CD4-positive, alpha-beta T cell (primary cell): ENCODE measurements at regions of chr11 and their contacts with region 1.

Region 1: GRCh38 chr11:59171508-59172322 is at the start of gene DTX4:
- DNase-seq: peak; percentile 78 to 94 (median 86)
- ATAC-seq: peak; percentile 87
- H3K4me3 ChIP-seq: peak within 1 kb of the TSS; percentile 73
- H3K4me3 Mint-ChIP-seq: peak within 1 kb of the TSS; percentile 89
- H3K27ac ChIP-seq: no peak within 1 kb of the TSS
- H3K27ac Mint-ChIP-seq: peak within 1 kb of the TSS; percentile 31
- H3K4me1 ChIP-seq: peaks cover 18% of the 10 kb centered on the region
- H3K4me1 Mint-ChIP-seq: peaks cover 13% of the 10 kb centered on the region
- H3K27me3 ChIP-seq: no peaks in the 10 kb centered on the region
- H3K27me3 Mint-ChIP-seq: peaks cover 8% of the 10 kb centered on the region
- CTCF ChIP-seq: peak; percentile 87
- total RNA-seq, gene DTX4: 0.93 to 1.0 TPM

Region 2: DNA sequence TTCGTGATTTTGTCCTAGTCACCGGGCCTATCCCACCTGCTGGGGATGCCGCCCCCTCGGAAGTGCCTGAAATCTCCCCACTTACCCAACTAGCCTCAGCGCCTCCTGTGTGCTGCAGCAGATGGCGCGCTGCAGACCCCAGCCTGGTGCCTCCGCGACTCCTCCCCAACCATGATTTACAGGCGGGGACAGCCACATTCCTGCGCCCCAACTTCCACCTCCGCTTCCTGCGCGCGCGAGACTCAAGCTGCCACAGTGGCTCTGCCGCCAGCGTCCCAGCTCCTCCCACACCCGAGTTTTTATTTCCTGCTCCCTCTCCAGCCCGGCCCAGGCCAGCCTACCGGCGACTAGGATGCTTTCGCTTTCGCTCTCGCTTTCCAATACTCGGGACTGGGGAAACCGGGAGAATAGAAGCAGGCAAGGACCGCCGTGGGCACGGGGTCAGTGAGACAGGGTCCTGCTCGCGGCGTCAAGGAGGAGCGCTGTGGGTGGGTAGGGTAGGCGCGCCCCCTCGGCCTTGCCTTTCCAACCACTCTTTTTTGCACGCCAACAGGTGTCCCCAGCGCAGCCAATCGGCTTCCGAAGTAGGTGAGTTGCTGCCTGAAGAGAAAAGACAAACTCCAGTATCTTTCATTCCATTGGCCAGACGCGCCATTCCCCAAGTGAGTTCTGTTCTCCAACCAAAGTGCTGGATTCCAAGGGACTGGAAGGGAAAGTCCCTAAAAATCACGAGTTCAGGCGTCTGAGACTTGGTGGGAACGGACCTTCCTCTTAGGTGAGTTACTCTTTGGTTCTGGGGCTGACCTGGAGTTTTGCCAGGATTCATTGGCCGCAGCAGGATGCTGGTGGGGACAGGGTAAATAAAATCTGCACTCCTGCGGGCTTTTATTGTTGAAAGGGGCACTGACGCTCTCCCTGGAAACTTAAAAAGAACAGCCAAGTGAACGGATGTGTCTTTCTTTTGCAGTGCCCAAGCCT is 28.9 kb before region 1 on chr11 and contains the start of gene FAM111A:
- CTCF ChIA-PET with region 1: interaction called, 51 read pairs
- POLR2A ChIA-PET with region 1: interaction called, 16 read pairs
- intact Hi-C with region 1: no loop called
- DNase-seq: peak; percentile 67 to 95 (median 82)
- ATAC-seq: peak; percentile 81
- H3K4me3 ChIP-seq: peak within 1 kb of the TSS; percentile 79
- H3K4me3 Mint-ChIP-seq: peak within 1 kb of the TSS; percentile 94
- H3K27ac ChIP-seq: peak within 1 kb of the TSS; percentile 80 to 91
- H3K27ac Mint-ChIP-seq: peak within 1 kb of the TSS; percentile 90
- H3K4me1 ChIP-seq: peaks cover 23% of the 10 kb centered on the region
- H3K4me1 Mint-ChIP-seq: peaks cover 50% of the 10 kb centered on the region
- H3K27me3 ChIP-seq: no peaks in the 10 kb centered on the region
- H3K27me3 Mint-ChIP-seq: no peaks in the 10 kb centered on the region
- CTCF ChIP-seq: no peak
- total RNA-seq, gene FAM111A: 32.8 to 34.4 TPM

Region 3: GRCh38 chr11:59158206-59159068 is 13.3 kb before region 1 on chr11:
- CTCF ChIA-PET with region 1: interaction called, 34 read pairs
- POLR2A ChIA-PET with region 1: no interaction called
- intact Hi-C with region 1: no loop called
- DNase-seq: peak; percentile 34 to 88 (median 48)
- ATAC-seq: peak; percentile 97
- H3K4me3 ChIP-seq: no peak overlapping the region
- H3K4me3 Mint-ChIP-seq: no peak overlapping the region
- H3K27ac ChIP-seq: no peak overlapping the region
- H3K27ac Mint-ChIP-seq: no peak overlapping the region
- H3K4me1 ChIP-seq: no peaks in the 10 kb centered on the region
- H3K4me1 Mint-ChIP-seq: peaks cover 9% of the 10 kb centered on the region
- H3K27me3 ChIP-seq: no peaks in the 10 kb centered on the region
- H3K27me3 Mint-ChIP-seq: peaks cover 9% of the 10 kb centered on the region
- CTCF ChIP-seq: peak; percentile 82

Region 4: GRCh38 chr11:59207988-59208451 is 36.3 kb after region 1 on chr11:
- CTCF ChIA-PET with region 1: interaction called, 4 read pairs
- POLR2A ChIA-PET with region 1: interaction called, 7 read pairs
- intact Hi-C with region 1: loop called (anchors 1 kb)
- DNase-seq: peak in 10 of 14 experiments; percentile 2 to 77 (median 13)
- ATAC-seq: peak; percentile 84
- H3K4me3 ChIP-seq: peak overlapping the region; percentile 37
- H3K4me3 Mint-ChIP-seq: peak overlapping the region; percentile 38
- H3K27ac ChIP-seq: no peak overlapping the region
- H3K27ac Mint-ChIP-seq: peak overlapping the region; percentile 38
- H3K4me1 ChIP-seq: peaks cover 27% of the 10 kb centered on the region
- H3K4me1 Mint-ChIP-seq: peaks cover 30% of the 10 kb centered on the region
- H3K27me3 ChIP-seq: no peaks in the 10 kb centered on the region
- H3K27me3 Mint-ChIP-seq: no peaks in the 10 kb centered on the region
- CTCF ChIP-seq: peak; percentile 72

Region 5: GRCh38 chr11:59283825-59284772 is 112.4 kb after region 1 on chr11:
- CTCF ChIA-PET with region 1: interaction called, 3 read pairs
- POLR2A ChIA-PET with region 1: interaction called, 6 read pairs
- intact Hi-C with region 1: loop called (anchors 1 kb)
- DNase-seq: peak in 12 of 14 experiments; percentile 10 to 81 (median 38)
- ATAC-seq: peak; percentile 92
- H3K4me3 ChIP-seq: peak overlapping the region; percentile 4
- H3K4me3 Mint-ChIP-seq: peak overlapping the region; percentile 77
- H3K27ac ChIP-seq: no peak overlapping the region
- H3K27ac Mint-ChIP-seq: peak overlapping the region; percentile 6
- H3K4me1 ChIP-seq: peaks cover 15% of the 10 kb centered on the region
- H3K4me1 Mint-ChIP-seq: peaks cover 18% of the 10 kb centered on the region
- H3K27me3 ChIP-seq: no peaks in the 10 kb centered on the region
- H3K27me3 Mint-ChIP-seq: peaks cover 5% of the 10 kb centered on the region
- CTCF ChIP-seq: peak; percentile 82

Region 6: GRCh38 chr11:59394186-59394585 is 222.5 kb after region 1 on chr11:
- CTCF ChIA-PET with region 1: no interaction called
- POLR2A ChIA-PET with region 1: no interaction called
- intact Hi-C with region 1: no loop called
- DNase-seq: no peak
- ATAC-seq: no peak
- H3K4me3 ChIP-seq: no peak overlapping the region
- H3K4me3 Mint-ChIP-seq: no peak overlapping the region
- H3K27ac ChIP-seq: no peak overlapping the region
- H3K27ac Mint-ChIP-seq: no peak overlapping the region
- H3K4me1 ChIP-seq: no peaks in the 10 kb centered on the region
- H3K4me1 Mint-ChIP-seq: no peaks in the 10 kb centered on the region
- H3K27me3 ChIP-seq: no peaks in the 10 kb centered on the region
- H3K27me3 Mint-ChIP-seq: peaks cover 10% of the 10 kb centered on the region
- CTCF ChIP-seq: no peak

Region 7: DNA sequence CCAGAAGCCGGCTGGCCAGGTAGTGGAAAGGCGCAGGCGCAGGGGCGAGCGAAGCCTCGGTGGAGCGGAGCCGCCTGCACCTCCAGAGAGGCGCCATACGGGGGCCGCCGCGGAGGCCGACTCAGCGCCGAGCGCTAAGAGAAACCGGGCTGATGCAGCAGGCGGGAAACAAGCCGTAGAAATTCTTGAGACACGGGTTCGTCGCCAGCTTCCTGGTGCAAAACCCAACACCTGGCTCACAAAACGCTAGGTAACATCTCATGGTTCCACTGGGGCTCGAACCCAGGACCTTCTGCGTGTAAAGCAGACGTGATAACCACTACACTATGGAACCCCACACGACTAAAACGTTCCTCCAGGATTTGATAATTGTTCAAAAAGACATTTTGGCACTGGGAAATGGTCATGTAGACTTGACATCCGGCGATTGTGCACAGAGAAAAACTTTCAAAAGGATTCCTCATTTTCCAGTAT is 378.7 kb after region 1 on chr11:
- CTCF ChIA-PET with region 1: no interaction called
- POLR2A ChIA-PET with region 1: no interaction called
- intact Hi-C with region 1: loop called in 1 of 2 experiments (anchors 10 kb)
- DNase-seq: peak; percentile 71 to 94 (median 82)
- ATAC-seq: peak; percentile 81
- H3K4me3 ChIP-seq: peak overlapping the region; percentile 57
- H3K4me3 Mint-ChIP-seq: peak overlapping the region; percentile 94
- H3K27ac ChIP-seq: peak overlapping the region; percentile 35 to 37
- H3K27ac Mint-ChIP-seq: peak overlapping the region; percentile 99
- H3K4me1 ChIP-seq: peaks cover 15% of the 10 kb centered on the region
- H3K4me1 Mint-ChIP-seq: peaks cover 33% of the 10 kb centered on the region
- H3K27me3 ChIP-seq: no peaks in the 10 kb centered on the region
- H3K27me3 Mint-ChIP-seq: peaks cover 11% of the 10 kb centered on the region
- CTCF ChIP-seq: peak; percentile 60